ENCODE measurements at regions of chr7 and their contacts with region 1.

Region 1: DNA sequence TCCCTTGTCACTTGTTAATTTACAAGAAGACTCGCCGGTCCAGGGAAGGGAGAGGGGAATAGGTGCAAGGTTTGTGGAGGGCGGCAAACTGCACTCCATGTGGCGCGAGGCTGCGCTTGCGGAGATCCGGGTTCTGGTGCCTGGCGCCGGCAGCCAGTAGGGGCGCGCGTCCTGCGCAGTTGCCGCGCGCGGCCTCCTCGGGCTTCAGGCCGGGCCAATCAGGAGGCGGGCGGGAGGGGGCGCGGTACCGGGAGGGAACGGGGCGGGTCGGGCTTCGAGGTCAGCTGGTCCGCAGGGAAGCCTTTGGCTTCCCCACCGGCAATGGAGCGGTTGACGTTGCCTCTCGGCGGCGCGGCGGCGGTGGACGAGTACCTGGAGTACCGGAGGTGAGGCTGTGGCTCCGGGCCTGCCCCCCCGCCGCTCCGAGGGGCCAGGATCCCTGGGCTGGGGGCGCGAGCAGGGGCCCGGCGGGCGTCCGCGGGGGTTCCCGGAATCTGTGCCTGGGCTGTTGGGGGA is at the start of gene FAM221A:
- H3K4me3 Mint-ChIP-seq: peak within 1 kb of the TSS; percentile 91
- H3K27ac Mint-ChIP-seq: peak within 1 kb of the TSS; percentile 60
- H3K4me1 Mint-ChIP-seq: peaks cover 8% of the 10 kb centered on the region
- H3K27me3 Mint-ChIP-seq: peaks cover 12% of the 10 kb centered on the region

Region 2: GRCh38 chr7:23404546-23405239 is 275.3 kb before region 1 on chr7:
- intact Hi-C with region 1: no loop called
- H3K4me3 Mint-ChIP-seq: no peak overlapping the region
- H3K27ac Mint-ChIP-seq: no peak overlapping the region
- H3K4me1 Mint-ChIP-seq: no peaks in the 10 kb centered on the region
- H3K27me3 Mint-ChIP-seq: no peaks in the 10 kb centered on the region

Region 3: GRCh38 chr7:23597094-23598091 is 82.6 kb before region 1 on chr7 and contains the start of gene CCDC126:
- intact Hi-C with region 1: loop called (anchors 1 kb)
- H3K4me3 Mint-ChIP-seq: peak within 1 kb of the TSS; percentile 81
- H3K27ac Mint-ChIP-seq: peak within 1 kb of the TSS; percentile 79
- H3K4me1 Mint-ChIP-seq: peaks cover 26% of the 10 kb centered on the region
- H3K27me3 Mint-ChIP-seq: peaks cover 17% of the 10 kb centered on the region

Region 4: GRCh38 chr7:23662124-23662983 is 17.6 kb before region 1 on chr7:
- intact Hi-C with region 1: no loop called
- H3K4me3 Mint-ChIP-seq: no peak overlapping the region
- H3K27ac Mint-ChIP-seq: no peak overlapping the region
- H3K4me1 Mint-ChIP-seq: no peaks in the 10 kb centered on the region
- H3K27me3 Mint-ChIP-seq: no peaks in the 10 kb centered on the region

Measured in dendritic cell treated with granulocyte-macrophage colony-stimulating factor and Interleukin-4, amounts not matched to agents 40 ng/mL and 50 ng/mL, for 4 days (primary cell).